ENCODE measurements at regions of chr6 and their contacts with region 1.

Region 1: GRCh38 chr6:157274471-157275226 is 48.7 kb downstream of the TMEM242 start:
- DNase-seq: peak; percentile 94
- CTCF ChIP-seq: peak; percentile 92

Region 2: GRCh38 chr6:157258878-157259277 is 15.8 kb before region 1 on chr6:
- CTCF ChIA-PET with region 1: interaction called, 16 read pairs
- POLR2A ChIA-PET with region 1: no interaction called
- DNase-seq: no peak
- CTCF ChIP-seq: no peak

Region 3: GRCh38 chr6:157289764-157290163 is 15.1 kb after region 1 on chr6:
- CTCF ChIA-PET with region 1: interaction called, 16 read pairs
- POLR2A ChIA-PET with region 1: no interaction called
- DNase-seq: no peak
- CTCF ChIP-seq: no peak

Measured in GM10248 (cell line).